Activated CD8-positive, alpha-beta memory T cell treated with anti-CD3 and anti-CD28 coated beads, Interleukin-2, amount 10 ng/mL, durations not matched to agents 7 days and 5 days (primary cell): ENCODE measurements at regions of chr4 and their contacts with region 1.

Region 1: DNA sequence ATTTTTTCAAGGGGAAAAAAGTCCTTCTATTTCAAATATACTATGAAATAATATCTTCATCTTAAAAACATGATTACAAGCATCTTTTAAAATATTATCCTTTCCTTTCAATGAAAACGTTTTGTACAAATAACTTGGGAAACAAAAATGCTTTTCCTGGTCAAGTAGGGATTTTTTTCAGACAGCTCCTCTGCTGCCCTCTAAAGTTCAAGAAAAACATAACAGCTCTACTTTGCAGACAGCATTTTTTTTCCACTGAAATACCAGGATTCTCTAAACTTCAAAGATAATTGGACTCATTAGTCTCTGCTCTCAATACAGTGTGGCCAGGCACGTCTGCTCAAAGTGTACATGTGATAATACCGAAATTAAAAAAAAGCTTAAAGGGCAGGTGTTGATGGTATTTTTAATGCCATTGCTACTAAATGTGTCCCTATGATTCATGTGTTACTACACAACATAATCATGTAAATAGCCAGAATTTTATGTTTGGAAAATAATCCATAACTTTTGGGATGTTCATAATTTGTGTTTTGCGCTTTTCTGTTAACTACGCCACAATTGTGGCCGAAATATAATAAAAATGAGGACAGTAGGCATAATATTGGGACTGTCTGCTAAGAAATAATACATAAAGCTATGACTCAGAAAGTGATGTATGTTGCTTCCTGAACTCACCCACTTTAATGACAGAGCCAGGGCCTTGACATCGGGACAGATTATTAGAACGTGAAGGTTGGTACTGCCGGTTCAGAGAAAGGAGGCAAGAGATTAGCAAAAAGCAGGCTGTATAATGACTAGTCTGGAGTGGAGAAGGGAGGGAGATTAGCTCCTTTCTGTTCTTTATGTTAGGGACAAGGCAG is 478.9 kb downstream of the KCNIP4 start:
- DNase-seq: no peak
- ATAC-seq: no peak
- H3K4me3 Mint-ChIP-seq: no peak overlapping the region
- H3K27ac Mint-ChIP-seq: no peak overlapping the region
- H3K4me1 Mint-ChIP-seq: no peaks in the 10 kb centered on the region
- H3K27me3 Mint-ChIP-seq: no peaks in the 10 kb centered on the region

Region 2: GRCh38 chr4:20773144-20773997 is 696.3 kb before region 1 on chr4:
- CTCF ChIA-PET with region 1: interaction called, 13 read pairs
- DNase-seq: peak; percentile 41
- ATAC-seq: no peak
- H3K4me3 Mint-ChIP-seq: no peak overlapping the region
- H3K27ac Mint-ChIP-seq: no peak overlapping the region
- H3K4me1 Mint-ChIP-seq: no peaks in the 10 kb centered on the region
- H3K27me3 Mint-ChIP-seq: no peaks in the 10 kb centered on the region

Region 3: GRCh38 chr4:21451032-21451431 is 18.6 kb before region 1 on chr4:
- CTCF ChIA-PET with region 1: no interaction called
- DNase-seq: no peak
- ATAC-seq: no peak
- H3K4me3 Mint-ChIP-seq: no peak overlapping the region
- H3K27ac Mint-ChIP-seq: no peak overlapping the region
- H3K4me1 Mint-ChIP-seq: no peaks in the 10 kb centered on the region
- H3K27me3 Mint-ChIP-seq: no peaks in the 10 kb centered on the region

Region 4: GRCh38 chr4:21490682-21491081 is 21.0 kb after region 1 on chr4:
- CTCF ChIA-PET with region 1: no interaction called
- DNase-seq: no peak
- ATAC-seq: no peak
- H3K4me3 Mint-ChIP-seq: no peak overlapping the region
- H3K27ac Mint-ChIP-seq: no peak overlapping the region
- H3K4me1 Mint-ChIP-seq: no peaks in the 10 kb centered on the region
- H3K27me3 Mint-ChIP-seq: no peaks in the 10 kb centered on the region